ENCODE measurements at regions of chr17 and their contacts with region 1.

Region 1: DNA sequence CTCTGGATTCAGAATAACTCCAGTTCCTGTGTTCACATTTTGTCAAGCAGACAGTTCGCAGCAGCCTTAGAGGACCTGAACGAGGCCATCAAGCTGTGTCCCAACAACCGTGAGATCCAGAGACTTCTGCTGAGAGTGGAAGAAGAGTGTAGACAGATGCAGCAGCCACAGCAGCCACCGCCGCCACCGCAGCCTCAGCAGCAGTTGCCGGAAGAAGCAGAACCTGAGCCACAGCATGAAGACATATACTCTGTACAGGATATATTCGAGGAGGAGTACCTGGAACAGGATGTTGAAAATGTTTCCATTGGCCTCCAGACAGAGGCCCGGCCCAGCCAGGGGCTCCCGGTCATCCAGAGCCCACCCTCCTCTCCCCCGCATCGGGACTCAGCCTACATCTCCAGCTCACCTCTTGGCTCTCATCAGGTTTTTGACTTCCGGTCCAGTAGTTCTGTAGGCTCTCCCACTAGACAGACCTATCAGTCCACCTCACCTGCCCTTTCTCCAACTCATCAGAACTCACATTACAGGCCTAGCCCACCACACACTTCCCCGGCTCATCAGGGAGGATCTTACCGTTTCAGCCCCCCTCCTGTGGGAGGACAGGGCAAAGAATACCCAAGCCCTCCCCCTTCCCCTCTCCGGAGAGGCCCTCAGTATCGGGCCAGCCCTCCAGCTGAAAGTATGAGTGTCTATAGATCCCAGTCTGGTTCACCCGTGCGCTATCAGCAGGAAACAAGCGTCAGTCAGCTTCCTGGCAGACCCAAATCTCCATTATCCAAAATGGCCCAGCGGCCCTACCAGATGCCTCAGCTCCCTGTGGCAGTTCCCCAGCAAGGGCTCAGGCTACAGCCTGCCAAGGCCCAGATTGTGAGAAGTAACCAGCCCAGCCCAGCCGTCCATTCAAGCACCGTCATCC is 25.9 kb downstream of the CYB561 start:
- DNase-seq: peak in 1 of 5 donors; percentile 62
- H3K4me3 ChIP-seq: no peak overlapping the region
- H3K27ac ChIP-seq: no peak overlapping the region
- H3K4me1 ChIP-seq: no peaks in the 10 kb centered on the region
- H3K27me3 ChIP-seq: no peaks in the 10 kb centered on the region
- CTCF ChIP-seq: no peak

Region 2: GRCh38 chr17:63621766-63622519 is 201.7 kb after region 1 on chr17 and contains the start of gene MAP3K3:
- intact Hi-C with region 1: loop called (anchors 5 kb)
- DNase-seq: peak; percentile 100
- H3K4me3 ChIP-seq: peak within 1 kb of the TSS; percentile 45 to 79 (median 75)
- H3K27ac ChIP-seq: peak within 1 kb of the TSS; percentile 66 to 76
- H3K4me1 ChIP-seq: peaks cover 0 to 20% (median 13%) of the 10 kb centered on the region in 3 donors
- H3K27me3 ChIP-seq: no peaks in the 10 kb centered on the region
- CTCF ChIP-seq: no peak
- total RNA-seq, gene MAP3K3: 50.5 TPM

Measured in kidney (tissue), 22 donors.